Ascending aorta (tissue), 2 donors: ENCODE measurements at regions of chr7 and their contacts with region 1.

Region 1: GRCh38 chr7:128135515-128136214 is 104.4 kb upstream of the LRRC4 start:
- DNase-seq: peak in 1 of 2 donors; percentile 78
- H3K4me3 ChIP-seq: peak overlapping the region; percentile 68 to 72
- H3K27ac ChIP-seq: no peak overlapping the region
- H3K4me1 ChIP-seq: peaks cover 8% of the 10 kb centered on the region in 2 donors
- H3K27me3 ChIP-seq: no peaks in the 10 kb centered on the region
- CTCF ChIP-seq: peak; percentile 45 to 74 (median 49)

Region 2: DNA sequence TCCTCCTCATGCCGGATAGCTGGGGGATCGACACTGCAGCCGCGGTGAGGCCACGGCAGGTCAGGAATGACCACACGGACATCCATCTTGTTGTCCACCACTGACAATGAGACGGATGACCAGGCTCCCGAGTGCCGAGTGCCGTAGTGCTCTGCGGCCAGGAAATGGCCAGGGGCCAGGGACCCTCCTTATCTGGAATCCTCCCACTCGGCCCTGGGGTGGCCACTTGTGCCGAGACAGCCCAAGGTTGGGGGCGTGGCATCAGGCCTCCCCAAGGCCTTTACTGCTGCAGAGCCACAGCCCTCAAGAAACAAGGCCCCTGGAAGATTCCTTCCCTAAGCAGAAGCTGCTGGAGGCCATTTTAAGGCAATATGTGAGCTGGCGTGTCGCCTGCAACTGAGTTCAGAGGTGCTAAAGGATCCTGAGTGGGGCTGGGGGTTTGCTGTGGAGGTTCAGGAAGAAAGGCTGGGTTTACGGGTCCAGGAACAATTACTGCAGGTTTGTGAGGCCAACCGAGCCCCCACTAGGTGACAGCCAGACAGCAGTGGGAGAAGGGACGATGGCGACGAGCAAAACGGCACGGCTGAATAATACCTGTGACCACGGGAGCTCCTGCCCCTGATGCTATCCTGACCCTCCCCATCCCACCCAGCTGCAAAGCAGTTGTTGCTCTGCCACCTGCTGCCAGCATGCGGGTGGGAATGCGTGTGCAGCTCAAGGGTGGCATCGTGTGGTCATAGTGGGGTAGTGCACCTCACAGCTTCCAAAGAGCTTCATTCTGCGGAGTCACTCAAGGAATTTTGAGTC is 73.8 kb after region 1 on chr7:
- intact Hi-C with region 1: loop called (anchors 1 kb)
- DNase-seq: peak in 1 of 2 donors; percentile 74
- H3K4me3 ChIP-seq: no peak overlapping the region
- H3K27ac ChIP-seq: no peak overlapping the region
- H3K4me1 ChIP-seq: no peaks in the 10 kb centered on the region
- H3K27me3 ChIP-seq: no peaks in the 10 kb centered on the region
- CTCF ChIP-seq: peak; percentile 93 to 98 (median 97)